HEK293T (cell line): ENCODE measurements at regions of chr17 and their contacts with region 1.

Region 1: DNA sequence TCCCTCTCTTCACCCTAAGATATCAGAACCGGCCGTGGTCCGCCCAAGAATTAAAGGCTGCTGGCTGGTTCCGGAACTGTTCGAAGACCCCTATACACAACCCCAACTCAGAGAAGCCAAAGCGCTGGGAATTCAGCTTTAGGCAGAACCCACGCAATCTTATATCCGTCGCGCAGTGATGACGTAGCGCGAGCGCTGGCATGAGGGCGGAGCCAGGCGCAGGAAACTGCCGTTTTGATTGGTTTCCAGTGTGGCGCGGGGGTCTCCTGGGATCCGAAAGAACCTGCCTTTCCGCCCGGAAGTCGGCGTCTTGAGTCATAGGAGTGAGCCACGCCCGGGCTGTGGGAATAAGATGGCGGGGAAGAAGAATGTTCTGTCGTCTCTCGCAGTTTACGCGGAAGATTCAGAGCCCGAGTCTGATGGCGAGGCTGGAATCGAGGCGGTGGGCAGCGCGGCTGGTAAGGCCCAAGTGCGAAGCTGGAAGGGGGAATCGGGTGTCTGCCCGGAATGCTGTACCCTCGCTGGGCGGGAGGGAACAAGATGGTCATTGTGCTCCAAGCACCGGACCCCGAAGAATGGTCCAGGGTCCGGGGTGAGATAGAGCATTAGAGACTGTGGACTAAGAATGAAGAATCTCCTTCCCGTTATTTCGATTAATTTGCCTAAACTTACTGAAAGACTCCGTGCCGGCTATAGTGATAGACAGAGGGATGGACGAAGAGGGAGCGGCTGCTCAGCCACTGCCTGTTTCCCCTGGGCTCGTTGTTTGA is at the starts of genes RECQL5 and SAP30BP:
- DNase-seq: peak; percentile 98

Region 2: GRCh38 chr17:75652915-75653549 is 14.2 kb before region 1 on chr17:
- CTCF ChIA-PET with region 1: interaction called, 8 read pairs
- POLR2A ChIA-PET with region 1: interaction called, 14 read pairs
- DNase-seq: peak; percentile 80

Region 3: GRCh38 chr17:75693500-75694481 is 26.6 kb after region 1 on chr17:
- CTCF ChIA-PET with region 1: no interaction called
- POLR2A ChIA-PET with region 1: no interaction called
- DNase-seq: no peak